Posterior vena cava (tissue), 2 donors: ENCODE measurements at regions of chrX and their contacts with region 1.

Region 1: GRCh38 chrX:76555814-76556213 is 128.3 kb downstream of the MAGEE1 start:
- DNase-seq: no peak

Region 2: DNA sequence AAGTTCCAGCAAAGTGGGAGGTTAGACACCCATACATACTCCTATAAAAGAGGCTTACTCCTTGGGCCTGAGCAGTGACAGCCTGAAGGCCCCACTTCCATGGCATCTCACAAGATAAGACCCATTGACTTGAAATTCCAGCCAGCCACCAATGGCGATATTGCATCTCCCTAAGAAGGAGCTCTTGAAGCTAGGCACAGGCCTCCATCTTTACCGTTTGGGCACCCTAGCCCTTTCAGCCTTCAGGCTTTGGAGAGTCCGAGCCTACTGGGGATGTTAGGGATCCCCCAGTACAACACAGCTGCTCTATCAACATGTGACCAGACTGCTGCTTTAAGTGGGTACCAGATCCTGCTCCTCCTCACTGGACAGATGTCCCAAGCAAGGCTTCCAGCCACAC is 61.2 kb after region 1 on chrX:
- intact Hi-C with region 1: loop called in 1 of 2 experiments (anchors 2 kb)
- DNase-seq: no peak